Vagina (tissue), 2 donors: ENCODE measurements at regions of chr3 and their contacts with region 1.

Region 1: DNA sequence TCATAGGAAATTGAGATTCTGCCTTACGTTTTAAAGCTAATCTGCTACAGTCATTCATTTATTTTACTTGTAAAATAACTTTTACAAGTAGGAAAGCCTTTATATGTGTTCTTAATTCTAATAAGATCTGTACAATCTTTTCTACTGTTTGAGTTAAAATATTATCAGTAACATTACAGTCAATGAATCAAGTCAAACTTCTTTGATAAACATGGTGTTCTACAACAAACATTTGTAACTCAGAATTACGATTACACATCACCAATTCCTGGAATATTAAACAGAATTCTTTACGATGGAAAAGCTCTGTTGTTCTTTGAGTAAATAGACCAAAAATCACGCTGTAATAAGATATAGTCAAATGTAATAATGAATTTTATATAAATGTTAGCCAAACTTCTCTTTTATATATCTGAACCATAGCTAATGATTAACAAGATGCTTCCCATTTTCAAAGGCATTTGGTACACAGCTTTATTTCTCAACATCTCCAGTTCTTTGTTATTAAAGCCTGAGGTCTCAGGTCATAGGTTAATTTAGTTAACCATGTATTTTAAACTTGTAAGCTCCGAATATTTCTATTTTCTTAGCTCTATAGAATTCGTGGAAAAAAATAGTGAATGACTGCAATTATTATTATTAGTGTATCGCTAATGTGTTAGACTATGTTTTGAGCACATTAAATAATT is 232.4 kb downstream of the NAALADL2 start:
- DNase-seq: no peak
- H3K4me3 ChIP-seq: no peak overlapping the region
- H3K27ac ChIP-seq: no peak overlapping the region
- H3K4me1 ChIP-seq: peaks cover 6% of the 10 kb centered on the region
- H3K27me3 ChIP-seq: no peaks in the 10 kb centered on the region
- CTCF ChIP-seq: no peak
- POLR2A ChIP-seq: no peak

Region 2: DNA sequence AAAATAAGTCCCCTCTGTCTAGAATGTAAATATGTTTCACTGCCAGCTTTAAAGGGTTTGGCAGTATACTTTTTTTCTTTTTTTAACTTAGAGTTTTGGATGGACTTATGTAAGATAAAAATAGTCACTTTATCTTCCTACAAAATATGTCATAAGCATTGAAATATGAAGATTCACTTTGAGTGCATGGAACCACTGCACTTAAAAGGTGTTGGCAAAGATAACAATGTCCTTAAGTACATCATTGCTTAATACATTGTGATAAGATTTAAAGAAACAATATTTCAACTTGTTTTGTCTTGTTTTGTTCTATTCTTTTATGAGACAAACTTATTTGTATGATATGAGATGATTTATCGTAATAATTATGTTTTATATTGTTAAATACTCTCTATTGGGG is 298.7 kb before region 1 on chr3:
- intact Hi-C with region 1: no loop called
- DNase-seq: no peak
- H3K4me3 ChIP-seq: no peak overlapping the region
- H3K27ac ChIP-seq: no peak overlapping the region
- H3K4me1 ChIP-seq: peaks cover 4% of the 10 kb centered on the region
- H3K27me3 ChIP-seq: no peaks in the 10 kb centered on the region
- CTCF ChIP-seq: no peak
- POLR2A ChIP-seq: no peak

Region 3: GRCh38 chr3:175059788-175060187 is 31.8 kb before region 1 on chr3:
- intact Hi-C with region 1: loop called (anchors 2 kb)
- DNase-seq: no peak
- H3K4me3 ChIP-seq: no peak overlapping the region
- H3K27ac ChIP-seq: no peak overlapping the region
- H3K4me1 ChIP-seq: no peaks in the 10 kb centered on the region
- H3K27me3 ChIP-seq: no peaks in the 10 kb centered on the region
- CTCF ChIP-seq: no peak
- POLR2A ChIP-seq: no peak